BJ (cell line): ENCODE measurements at regions of chr10 and their contacts with region 1.

Region 1: DNA sequence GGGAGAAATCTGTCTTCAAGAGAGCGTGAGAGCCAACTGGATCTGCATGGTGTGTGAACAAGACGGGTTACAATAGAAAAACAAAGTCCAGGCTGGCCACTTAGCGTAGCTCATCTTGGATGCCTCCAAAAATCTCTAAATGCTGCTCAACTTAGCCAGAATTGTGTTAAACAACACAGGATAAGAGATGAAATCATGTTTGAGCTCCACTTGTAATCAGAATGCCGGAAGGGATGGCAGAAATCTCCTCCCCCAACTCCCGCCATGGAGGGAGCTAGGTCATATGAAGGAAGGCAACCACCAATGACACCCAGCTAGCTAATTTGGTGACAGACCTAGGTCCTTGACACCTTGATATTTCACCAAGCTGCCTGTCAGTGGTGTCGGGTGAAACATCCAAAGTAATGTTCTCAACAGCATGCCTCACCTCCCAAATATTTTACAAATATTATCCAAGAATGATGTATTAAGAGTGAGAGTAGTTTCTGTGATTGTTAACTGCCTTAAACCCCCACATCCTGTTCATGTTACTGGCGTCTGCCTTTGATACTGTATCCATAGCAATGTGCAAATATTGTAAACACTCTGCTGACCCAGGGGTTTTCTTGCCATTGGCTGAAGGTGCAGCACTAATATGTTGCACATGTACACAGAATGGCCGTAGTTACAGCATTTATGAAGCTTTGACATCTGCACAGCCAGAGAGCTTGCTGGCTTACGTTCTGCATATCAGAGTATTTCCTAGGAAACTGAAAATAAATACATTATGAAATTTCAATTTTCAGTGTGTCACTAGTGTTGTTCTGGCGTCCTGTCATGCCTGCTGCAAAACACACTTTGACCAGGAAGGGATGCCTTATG is 25.8 kb downstream of the TMEM254 start:
- DNase-seq: peak; percentile 83
- H3K4me3 ChIP-seq: no peak overlapping the region
- H3K27me3 ChIP-seq: peaks cover 2% of the 10 kb centered on the region; the same call in 1 of the 2 replicates
- CTCF ChIP-seq: no peak

Region 2: DNA sequence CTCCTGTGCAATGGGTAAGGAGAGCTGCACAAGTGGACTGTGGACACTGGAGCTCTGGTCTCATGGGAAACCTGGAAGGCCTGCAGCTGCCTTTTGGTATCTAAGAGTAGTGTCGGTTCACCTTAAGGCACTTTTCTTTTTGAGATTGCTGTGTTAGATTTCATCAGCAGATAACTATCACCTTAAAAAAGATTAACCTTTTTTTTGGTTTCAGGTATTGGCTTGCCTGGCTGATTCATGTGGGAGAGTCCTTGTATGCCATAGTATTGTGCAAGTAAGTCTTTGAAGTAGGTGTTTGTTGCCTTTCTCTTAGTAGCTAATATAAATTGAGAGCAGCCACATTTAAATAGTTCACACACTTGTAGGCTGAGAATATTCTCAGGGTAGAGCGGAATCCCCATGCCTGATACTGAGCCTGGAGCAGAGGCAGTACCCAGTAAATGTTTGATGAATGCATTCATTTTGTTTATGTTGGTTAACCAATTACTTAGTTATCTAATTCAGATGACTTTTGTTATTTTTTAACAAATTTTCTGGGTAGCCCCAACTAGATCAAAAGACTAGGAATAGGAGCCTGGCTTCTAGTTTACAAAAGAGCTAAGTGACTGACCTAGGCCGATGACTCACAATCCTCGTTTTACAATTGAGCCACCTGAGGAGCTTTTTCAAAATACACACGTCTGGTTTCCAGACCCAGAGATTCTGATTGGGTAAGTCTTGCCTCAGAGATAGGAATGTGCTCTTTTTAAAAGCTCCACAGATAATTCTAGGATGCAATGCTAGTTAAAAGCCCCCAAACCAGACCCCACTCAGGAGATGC is 22.2 kb before region 1 on chr10:
- CTCF ChIA-PET with region 1: no interaction called
- POLR2A ChIA-PET with region 1: no interaction called
- DNase-seq: no peak
- H3K4me3 ChIP-seq: no peak overlapping the region
- H3K27me3 ChIP-seq: no peaks in the 10 kb centered on the region
- CTCF ChIP-seq: no peak

Region 3: DNA sequence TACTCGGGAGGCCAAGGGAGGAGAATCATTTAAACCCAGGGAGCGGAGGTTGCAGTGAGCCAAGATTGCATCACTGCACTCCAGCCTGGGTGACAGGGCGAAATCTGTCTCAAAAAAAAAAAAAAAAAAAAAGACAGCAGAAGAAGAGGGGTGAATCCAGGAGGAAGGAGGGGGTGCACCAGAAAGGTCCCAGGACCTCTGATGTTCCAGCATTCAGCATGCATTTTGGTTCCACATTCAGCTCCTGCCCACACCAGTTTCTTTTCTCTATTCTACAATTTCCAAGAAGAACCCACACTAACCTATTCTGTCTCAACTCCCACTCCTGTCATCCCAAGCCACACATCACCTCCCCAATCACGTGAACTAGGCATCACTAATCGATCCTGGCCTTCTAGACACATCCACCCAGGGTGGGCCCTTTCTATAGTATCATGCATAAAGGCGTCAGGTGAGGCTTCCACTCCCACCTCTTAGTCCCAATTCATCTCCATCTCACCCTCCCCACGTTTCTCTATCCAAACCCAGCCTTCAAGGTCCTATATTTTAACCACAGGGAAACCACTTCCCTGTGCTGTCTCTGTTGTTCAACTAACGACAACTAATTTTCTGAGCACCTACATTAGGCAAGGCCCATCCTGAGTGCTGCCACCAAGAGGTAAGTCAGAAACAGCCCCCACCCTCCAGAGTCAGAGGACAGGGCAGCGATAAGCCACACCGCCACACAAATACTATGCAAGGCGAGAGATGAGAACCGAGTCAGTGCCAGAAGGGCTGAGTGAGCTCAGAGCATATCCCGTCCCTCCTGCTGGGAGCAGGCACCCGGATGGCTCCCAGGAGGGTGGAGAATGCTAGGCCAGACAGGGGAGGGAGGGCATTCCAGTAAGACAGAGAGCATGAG is 98.9 kb after region 1 on chr10:
- CTCF ChIA-PET with region 1: no interaction called
- POLR2A ChIA-PET with region 1: interaction called, 20 read pairs
- DNase-seq: peak; percentile 76
- H3K4me3 ChIP-seq: peak overlapping the region; percentile 87
- H3K27me3 ChIP-seq: no peaks in the 10 kb centered on the region
- CTCF ChIP-seq: peak; percentile 38